ENCODE measurements at regions of chr13 and their contacts with region 1.

Region 1: DNA sequence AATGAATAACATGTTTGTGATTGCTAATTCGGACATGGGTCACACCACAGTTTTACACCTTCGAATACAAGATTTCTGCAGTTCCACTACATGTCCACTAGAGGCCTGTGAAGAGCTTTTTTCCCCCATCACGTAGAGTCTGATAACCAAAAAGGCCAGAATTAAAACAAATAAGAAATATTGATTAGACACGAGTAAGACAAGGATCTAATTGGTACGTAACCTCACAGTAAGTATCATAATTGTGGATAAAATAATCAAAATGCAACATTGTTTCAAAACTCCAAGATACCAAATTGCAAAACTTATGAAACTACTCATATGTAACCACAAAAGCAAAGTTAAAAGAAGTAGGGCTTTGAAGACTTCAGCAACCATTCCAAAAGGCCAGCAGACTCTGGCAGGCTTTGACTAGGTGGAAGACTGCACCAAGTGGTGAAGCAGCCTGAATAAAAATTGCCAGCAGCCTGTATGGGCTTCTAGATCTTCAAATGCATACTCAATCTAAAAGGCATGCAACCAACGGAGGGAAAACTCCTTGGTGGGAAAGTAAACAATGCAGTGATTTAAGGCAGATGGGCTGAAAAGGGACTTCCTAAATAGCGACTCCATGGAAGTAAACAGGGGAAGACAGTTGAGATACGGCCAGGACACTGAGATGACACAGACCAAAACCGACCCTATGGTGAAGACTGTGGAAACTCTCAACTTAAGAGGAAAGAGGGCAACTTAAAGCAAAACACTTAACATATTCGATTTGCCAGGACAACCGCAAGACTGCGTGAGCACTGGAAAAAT is 56.7 kb downstream of the STARD13 start:
- DNase-seq: no peak
- H3K4me3 ChIP-seq: no peak overlapping the region
- H3K27ac ChIP-seq: no peak overlapping the region
- H3K4me1 ChIP-seq: peaks cover 0 to 19% of the 10 kb centered on the region in 2 donors
- H3K27me3 ChIP-seq: no peaks in the 10 kb centered on the region
- CTCF ChIP-seq: peak; percentile 74 to 91 (median 85)

Region 2: DNA sequence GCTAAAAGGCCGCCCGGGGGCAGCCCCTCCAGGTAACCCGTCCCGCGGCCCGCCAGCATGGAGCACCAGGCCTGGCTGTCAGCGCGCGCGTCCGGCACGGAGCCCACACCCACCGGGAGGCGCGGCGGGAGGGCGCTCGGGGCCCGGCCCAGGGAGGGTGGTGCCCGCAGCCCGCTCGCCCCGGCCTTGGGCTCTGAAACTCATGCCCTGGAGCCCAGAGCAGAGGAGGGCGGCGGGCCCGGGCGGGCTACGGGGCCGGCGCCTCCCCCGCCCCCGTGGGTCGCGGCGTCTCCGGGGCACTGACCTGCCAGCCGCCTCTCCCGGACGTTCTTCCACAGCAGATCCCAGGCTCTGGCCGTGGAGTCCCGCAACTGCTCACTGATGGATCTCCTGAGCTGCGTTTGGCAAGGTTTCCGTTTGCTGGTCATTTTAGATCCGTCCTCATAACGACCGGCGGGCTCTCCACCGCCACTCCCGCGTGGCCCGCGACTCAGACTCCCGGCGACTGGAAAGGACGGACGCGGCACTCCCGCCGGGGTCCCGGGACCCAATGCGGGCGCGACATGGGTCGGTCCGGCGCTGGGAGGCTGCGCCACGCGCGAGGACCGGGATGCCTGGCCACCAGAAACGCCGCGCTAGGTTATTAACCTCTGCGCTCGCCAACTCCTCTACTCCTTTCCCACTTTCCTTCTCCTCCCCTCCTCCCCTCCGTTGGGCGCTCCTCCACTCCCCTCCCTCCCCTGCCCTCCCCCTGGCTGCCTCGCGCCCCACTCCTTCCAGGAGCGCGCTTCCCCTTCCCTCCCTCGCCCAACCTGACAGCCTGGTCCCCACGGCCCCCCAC is 121.4 kb after region 1 on chr13:
- intact Hi-C with region 1: loop called (anchors 5 kb)
- DNase-seq: peak in 1 of 2 donors; percentile 79
- H3K4me3 ChIP-seq: peak overlapping the region; percentile 64 to 96
- H3K27ac ChIP-seq: peak overlapping the region; percentile 90 to 94
- H3K4me1 ChIP-seq: peaks cover 5 to 12% of the 10 kb centered on the region in 2 donors
- H3K27me3 ChIP-seq: no peaks in the 10 kb centered on the region
- CTCF ChIP-seq: no peak

Region 3: DNA sequence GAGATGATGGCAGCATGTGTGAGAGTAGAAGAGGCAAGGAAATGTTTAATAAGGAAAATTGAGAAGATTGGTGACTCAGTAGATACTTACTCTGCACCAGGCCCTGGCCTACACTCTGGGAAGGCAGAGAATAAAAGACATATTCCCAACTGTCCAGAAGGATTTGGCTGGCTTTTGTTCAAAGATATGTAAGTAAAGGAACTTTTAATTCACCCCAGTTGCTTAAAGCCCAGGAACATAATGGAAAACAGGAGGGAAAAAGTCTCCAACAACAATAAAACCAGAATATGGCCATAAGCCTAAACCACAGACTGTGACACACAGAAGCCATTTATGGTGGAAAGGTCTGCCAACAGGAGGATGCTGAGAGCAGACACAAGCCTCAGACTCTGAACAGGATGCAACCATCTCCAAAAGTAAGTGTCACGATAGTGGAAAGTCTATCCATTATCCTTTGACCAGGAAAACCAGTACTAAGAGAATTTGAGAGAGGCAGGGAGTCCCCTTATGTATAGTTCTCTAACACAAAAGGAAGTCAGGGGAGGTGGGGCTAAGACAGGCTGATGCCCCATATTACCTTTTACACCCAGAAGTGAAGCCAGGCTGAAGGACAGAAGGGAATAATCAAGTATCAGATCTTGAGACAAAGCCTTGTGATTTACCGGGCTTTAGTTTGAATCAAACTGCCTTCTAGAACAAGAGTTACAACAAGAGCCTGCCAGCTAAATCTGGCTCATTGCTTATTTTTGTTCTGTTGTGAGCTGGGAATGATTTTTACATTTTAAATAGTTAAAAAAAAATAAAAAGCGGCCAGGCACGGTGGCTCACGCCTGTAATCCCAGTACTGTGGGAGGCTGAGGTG is 226.2 kb after region 1 on chr13:
- intact Hi-C with region 1: loop called (anchors 5 kb)
- DNase-seq: no peak
- H3K4me3 ChIP-seq: no peak overlapping the region
- H3K27ac ChIP-seq: peak overlapping the region; percentile 62 to 70
- H3K4me1 ChIP-seq: peaks cover 2 to 27% of the 10 kb centered on the region in 2 donors
- H3K27me3 ChIP-seq: no peaks in the 10 kb centered on the region
- CTCF ChIP-seq: no peak

Region 4: GRCh38 chr13:33487575-33488243 is 258.9 kb after region 1 on chr13:
- intact Hi-C with region 1: loop called (anchors 5 kb)
- DNase-seq: peak in 1 of 2 donors; percentile 65
- H3K4me3 ChIP-seq: peak overlapping the region; percentile 29 to 56
- H3K27ac ChIP-seq: peak overlapping the region; percentile 35 to 60
- H3K4me1 ChIP-seq: peaks cover 0 to 13% of the 10 kb centered on the region in 2 donors
- H3K27me3 ChIP-seq: no peaks in the 10 kb centered on the region
- CTCF ChIP-seq: peak in 2 of 3 experiments; percentile 25 to 43

Region 5: DNA sequence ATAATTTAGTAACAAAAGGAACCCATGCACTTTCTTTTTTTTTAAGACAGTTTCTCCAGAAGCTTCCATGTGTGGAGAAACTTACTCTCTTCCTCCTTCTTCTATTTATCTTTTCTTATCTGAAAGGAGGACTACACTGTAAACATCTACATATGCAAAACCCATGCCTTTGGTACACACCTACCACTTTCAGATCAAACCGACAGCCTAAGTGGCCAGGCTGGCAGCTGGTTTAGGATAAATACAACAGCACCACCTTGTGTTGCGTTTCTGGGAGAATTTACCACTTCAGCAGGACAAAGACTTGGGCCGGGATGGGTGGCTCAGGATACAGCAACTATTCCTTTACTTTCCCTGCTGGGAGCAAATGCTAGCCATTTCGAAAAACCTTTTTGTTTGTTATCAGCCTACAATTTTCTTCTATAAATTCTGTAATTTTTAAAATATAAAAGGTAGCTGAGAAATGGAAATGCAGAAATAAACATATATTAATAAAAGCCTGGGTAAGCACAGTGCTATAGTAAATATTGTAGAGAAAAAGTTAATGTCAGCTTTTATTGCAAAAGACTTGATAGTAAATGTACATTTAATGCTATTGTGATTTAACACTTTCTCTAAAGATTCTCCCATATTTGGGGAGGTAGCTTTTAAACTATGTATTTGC is 495.1 kb after region 1 on chr13:
- intact Hi-C with region 1: loop called (anchors 2 kb)
- DNase-seq: peak; percentile 22 to 89
- H3K4me3 ChIP-seq: no peak overlapping the region
- H3K27ac ChIP-seq: peak overlapping the region; percentile 61 to 64
- H3K4me1 ChIP-seq: peaks cover 10 to 11% of the 10 kb centered on the region in 2 donors
- H3K27me3 ChIP-seq: no peaks in the 10 kb centered on the region
- CTCF ChIP-seq: peak; percentile 60 to 78 (median 67)

Measured in ascending aorta (tissue), 2 donors.